Endothelial cell of umbilical vein (primary cell): ENCODE measurements at regions of chr3 and their contacts with region 1.

Region 1: DNA sequence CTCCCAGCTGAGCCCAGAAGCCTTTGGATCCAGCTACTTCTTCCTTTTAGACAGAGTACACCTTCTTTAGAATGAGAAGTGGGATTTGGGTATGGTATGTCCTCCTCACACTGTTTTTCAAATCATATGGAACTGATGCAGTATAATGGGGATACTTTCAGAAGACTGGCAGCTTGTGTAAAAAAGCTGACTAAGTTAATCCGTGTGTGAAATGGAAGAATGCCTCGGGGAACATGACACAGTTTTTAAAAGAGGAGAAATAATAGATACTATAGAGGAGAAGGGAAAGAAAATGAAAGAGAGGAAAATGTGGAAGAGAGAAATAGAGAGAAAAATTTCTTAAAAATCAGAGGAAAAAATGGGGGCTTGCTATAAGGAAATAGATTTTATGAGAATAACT is 47.7 kb downstream of the TUSC7 start:
- DNase-seq: no peak
- H3K4me3 ChIP-seq: no peak overlapping the region
- H3K27ac ChIP-seq: no peak overlapping the region
- H3K4me1 ChIP-seq: no peaks in the 10 kb centered on the region
- H3K27me3 ChIP-seq: no peaks in the 10 kb centered on the region
- CTCF ChIP-seq: no peak
- POLR2A ChIP-seq: no peak

Region 2: GRCh38 chr3:115819785-115820384 is 937.4 kb before region 1 on chr3:
- CTCF ChIA-PET with region 1: no interaction called
- POLR2A ChIA-PET with region 1: no interaction called
- dilution Hi-C with region 1: no loop called
- intact Hi-C with region 1: loop called (anchors 1 kb)
- DNase-seq: peak; percentile 87
- H3K4me3 ChIP-seq: no peak overlapping the region
- H3K27ac ChIP-seq: no peak overlapping the region
- H3K4me1 ChIP-seq: no peaks in the 10 kb centered on the region
- H3K27me3 ChIP-seq: peaks cover 3 to 6% of the 10 kb centered on the region in 2 experiments
- CTCF ChIP-seq: peak; percentile 86 to 93
- POLR2A ChIP-seq: no peak

Region 3: DNA sequence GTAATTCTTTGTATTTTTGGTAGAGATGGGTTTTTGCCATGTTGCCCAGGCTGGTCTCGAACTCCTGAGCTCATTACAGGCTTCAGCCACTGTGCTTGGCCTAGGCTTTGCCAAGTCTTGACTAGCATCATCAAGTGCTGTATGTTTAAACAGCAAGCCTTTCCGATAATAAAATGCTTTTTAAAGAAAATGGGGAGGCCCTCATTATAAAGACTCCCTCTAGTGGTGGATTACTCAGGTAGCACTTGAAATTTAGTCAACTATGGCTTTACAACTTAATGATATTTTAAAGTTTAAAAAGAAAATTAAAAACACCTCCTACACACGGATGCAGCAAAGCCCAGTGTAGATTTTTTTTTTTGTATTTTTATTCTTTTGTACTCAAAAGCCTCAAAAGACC is 920.4 kb before region 1 on chr3:
- CTCF ChIA-PET with region 1: no interaction called
- POLR2A ChIA-PET with region 1: no interaction called
- dilution Hi-C with region 1: no loop called
- intact Hi-C with region 1: loop called (anchors 5 kb)
- DNase-seq: peak; percentile 17
- H3K4me3 ChIP-seq: no peak overlapping the region
- H3K27ac ChIP-seq: no peak overlapping the region
- H3K4me1 ChIP-seq: no peaks in the 10 kb centered on the region
- H3K27me3 ChIP-seq: peaks cover 0 to 2% of the 10 kb centered on the region in 2 experiments
- CTCF ChIP-seq: peak; percentile 30 to 55
- POLR2A ChIP-seq: no peak

Region 4: GRCh38 chr3:115986555-115987207 is 770.6 kb before region 1 on chr3:
- CTCF ChIA-PET with region 1: no interaction called
- POLR2A ChIA-PET with region 1: no interaction called
- dilution Hi-C with region 1: no loop called
- intact Hi-C with region 1: loop called (anchors 1 kb)
- DNase-seq: no peak
- H3K4me3 ChIP-seq: no peak overlapping the region
- H3K27ac ChIP-seq: no peak overlapping the region
- H3K4me1 ChIP-seq: no peaks in the 10 kb centered on the region
- H3K27me3 ChIP-seq: no peaks in the 10 kb centered on the region
- CTCF ChIP-seq: no peak
- POLR2A ChIP-seq: no peak

Region 5: DNA sequence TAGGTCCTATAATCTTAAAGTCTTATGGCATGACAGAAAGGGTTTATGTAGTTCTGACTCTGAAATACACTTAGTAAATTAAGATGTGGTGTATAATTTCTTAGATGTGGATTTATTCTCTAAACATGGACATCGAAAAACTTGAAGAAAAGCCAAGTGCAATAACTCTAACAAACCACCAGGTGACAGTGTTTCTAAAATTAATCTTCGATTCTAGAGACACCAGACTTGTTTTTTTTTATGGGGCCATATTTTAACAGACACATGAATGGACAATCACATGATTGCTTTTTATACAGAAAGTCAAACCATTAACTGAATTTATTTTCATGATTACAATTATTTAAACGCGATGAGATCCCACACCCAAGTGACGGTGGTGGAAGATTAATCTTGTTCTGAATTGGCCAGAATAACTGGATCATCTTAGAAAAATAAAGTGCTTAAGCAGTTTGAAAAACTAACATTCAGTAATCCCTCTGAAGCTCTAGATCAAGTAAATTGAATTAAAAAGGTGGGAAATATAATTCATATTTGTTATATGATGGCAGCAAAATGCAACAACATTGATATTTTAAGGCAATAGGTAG is 617.1 kb before region 1 on chr3:
- CTCF ChIA-PET with region 1: interaction called, 4 read pairs
- POLR2A ChIA-PET with region 1: no interaction called
- dilution Hi-C with region 1: no loop called
- intact Hi-C with region 1: loop called (anchors 1 kb)
- DNase-seq: peak; percentile 1
- H3K4me3 ChIP-seq: no peak overlapping the region
- H3K27ac ChIP-seq: no peak overlapping the region
- H3K4me1 ChIP-seq: no peaks in the 10 kb centered on the region
- H3K27me3 ChIP-seq: no peaks in the 10 kb centered on the region
- CTCF ChIP-seq: peak; percentile 39 to 43
- POLR2A ChIP-seq: no peak

Region 6: DNA sequence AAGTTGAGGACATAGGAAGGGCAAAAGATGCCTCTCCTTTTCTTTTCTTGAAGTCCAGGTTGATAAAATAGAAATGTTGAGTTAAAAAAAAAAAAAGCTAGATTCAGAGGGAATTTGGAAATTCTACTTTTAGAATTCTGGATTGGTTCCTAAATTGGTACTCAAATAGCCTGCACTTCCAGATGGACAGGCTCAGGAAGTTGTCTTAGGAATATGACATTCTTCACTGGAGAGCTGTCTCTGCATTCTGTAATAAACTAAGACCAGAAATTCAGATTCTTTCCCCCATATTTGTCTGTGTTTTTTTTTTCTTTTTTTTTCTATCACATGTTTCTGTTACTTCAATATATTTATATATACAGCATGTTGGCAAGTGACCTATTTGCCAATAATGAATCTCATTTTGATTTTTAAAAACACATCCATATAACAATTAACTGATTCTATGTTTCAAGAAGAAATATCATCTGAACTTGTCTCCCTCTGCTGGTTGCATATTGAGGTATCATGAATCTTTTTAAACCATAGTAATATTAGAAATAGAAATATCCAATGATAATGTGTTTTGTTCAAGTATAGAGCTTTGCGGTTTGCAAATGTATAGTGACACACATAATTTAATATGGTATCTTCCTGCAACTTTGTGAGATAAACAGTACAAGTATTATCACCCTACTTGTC is 303.5 kb before region 1 on chr3:
- CTCF ChIA-PET with region 1: no interaction called
- POLR2A ChIA-PET with region 1: no interaction called
- dilution Hi-C with region 1: no loop called
- intact Hi-C with region 1: loop called (anchors 5 kb)
- DNase-seq: no peak
- H3K4me3 ChIP-seq: no peak overlapping the region
- H3K27ac ChIP-seq: no peak overlapping the region
- H3K4me1 ChIP-seq: no peaks in the 10 kb centered on the region
- H3K27me3 ChIP-seq: no peaks in the 10 kb centered on the region
- CTCF ChIP-seq: no peak
- POLR2A ChIP-seq: no peak

Region 7: DNA sequence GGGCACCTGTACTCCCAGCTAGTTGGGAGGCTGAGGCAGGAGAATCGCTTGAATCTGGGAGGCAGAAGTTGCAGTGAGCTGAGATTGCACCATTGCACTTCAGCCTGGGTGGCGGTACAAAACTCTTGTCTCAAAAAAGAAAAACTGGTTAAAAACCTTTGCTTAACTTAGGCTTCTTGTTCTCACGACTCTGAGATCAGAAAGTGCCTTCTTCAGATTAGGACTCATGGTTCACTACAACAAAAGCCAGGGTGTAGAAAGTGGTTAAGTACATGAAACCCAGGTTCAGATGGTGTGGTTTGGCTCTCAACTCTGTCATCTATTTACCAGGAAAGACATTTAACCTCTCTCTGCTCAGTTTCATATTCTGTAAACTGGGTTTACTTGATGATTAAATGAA is 120.7 kb after region 1 on chr3:
- CTCF ChIA-PET with region 1: no interaction called
- POLR2A ChIA-PET with region 1: no interaction called
- dilution Hi-C with region 1: no loop called
- intact Hi-C with region 1: no loop called
- DNase-seq: no peak
- H3K4me3 ChIP-seq: no peak overlapping the region
- H3K27ac ChIP-seq: no peak overlapping the region
- H3K4me1 ChIP-seq: no peaks in the 10 kb centered on the region
- H3K27me3 ChIP-seq: peaks cover 0 to 1% of the 10 kb centered on the region in 2 experiments
- CTCF ChIP-seq: no peak
- POLR2A ChIP-seq: no peak